PC-9 (cell line): ENCODE measurements at regions of chr6 and their contacts with region 1.

Region 1: GRCh38 chr6:53302678-53303360 is 45.9 kb downstream of the ELOVL5 start:
- DNase-seq: peak in 1 of 2 experiments; percentile 92
- H3K4me3 ChIP-seq: peak overlapping the region; percentile 34
- H3K27ac ChIP-seq: peak overlapping the region; percentile 87
- H3K4me1 ChIP-seq: peaks cover 45% of the 10 kb centered on the region
- H3K27me3 ChIP-seq: no peaks in the 10 kb centered on the region
- CTCF ChIP-seq: no peak

Region 2: GRCh38 chr6:53464921-53465460 is 162.2 kb after region 1 on chr6:
- CTCF ChIA-PET with region 1: no interaction called
- POLR2A ChIA-PET with region 1: no interaction called
- intact Hi-C with region 1: loop called (anchors 1 kb)
- DNase-seq: peak; percentile 76 to 88
- H3K4me3 ChIP-seq: no peak overlapping the region
- H3K27ac ChIP-seq: peak overlapping the region; percentile 76
- H3K4me1 ChIP-seq: peaks cover 36% of the 10 kb centered on the region
- H3K27me3 ChIP-seq: no peaks in the 10 kb centered on the region
- CTCF ChIP-seq: no peak